CD4-positive, alpha-beta T cell (primary cell): ENCODE measurements at regions of chr22 and their contacts with region 1.

Region 1: GRCh38 chr22:38872172-38872830 is at the start of gene CBX6:
- DNase-seq: peak; percentile 90 to 98 (median 94)
- ATAC-seq: peak; percentile 75
- H3K4me3 ChIP-seq: peak within 1 kb of the TSS; percentile 82
- H3K4me3 Mint-ChIP-seq: peak within 1 kb of the TSS; percentile 96
- H3K27ac ChIP-seq: peak within 1 kb of the TSS; percentile 58 to 73
- H3K27ac Mint-ChIP-seq: peak within 1 kb of the TSS; percentile 92
- H3K4me1 ChIP-seq: peaks cover 62% of the 10 kb centered on the region
- H3K4me1 Mint-ChIP-seq: peaks cover 63% of the 10 kb centered on the region
- H3K27me3 ChIP-seq: no peaks in the 10 kb centered on the region
- H3K27me3 Mint-ChIP-seq: no peaks in the 10 kb centered on the region
- CTCF ChIP-seq: no peak
- total RNA-seq, gene CBX6: 41.6 to 42.8 TPM

Region 2: GRCh38 chr22:37519268-37520195 is 1352.8 kb before region 1 on chr22 and contains the start of gene CARD10:
- CTCF ChIA-PET with region 1: no interaction called
- POLR2A ChIA-PET with region 1: no interaction called
- intact Hi-C with region 1: no loop called
- DNase-seq: peak in 5 of 14 experiments; percentile 6 to 51 (median 21)
- ATAC-seq: peak; percentile 82
- H3K4me3 ChIP-seq: peak within 1 kb of the TSS; percentile 30
- H3K4me3 Mint-ChIP-seq: peak within 1 kb of the TSS; percentile 81
- H3K27ac ChIP-seq: no peak within 1 kb of the TSS
- H3K27ac Mint-ChIP-seq: no peak within 1 kb of the TSS
- H3K4me1 ChIP-seq: peaks cover 13% of the 10 kb centered on the region
- H3K4me1 Mint-ChIP-seq: peaks cover 6% of the 10 kb centered on the region
- H3K27me3 ChIP-seq: peaks cover 40 to 49% of the 10 kb centered on the region in 2 experiments
- H3K27me3 Mint-ChIP-seq: peaks cover 48% of the 10 kb centered on the region
- CTCF ChIP-seq: no peak
- total RNA-seq, gene CARD10: 0.20 to 0.63 TPM

Region 3: GRCh38 chr22:38317122-38317994 is 554.9 kb before region 1 on chr22 and contains the start of gene CSNK1E:
- CTCF ChIA-PET with region 1: no interaction called
- POLR2A ChIA-PET with region 1: no interaction called
- intact Hi-C with region 1: loop called in 1 of 2 experiments (anchors 5 kb)
- DNase-seq: peak; percentile 37 to 88 (median 70)
- ATAC-seq: peak; percentile 55
- H3K4me3 ChIP-seq: peak within 1 kb of the TSS; percentile 67
- H3K4me3 Mint-ChIP-seq: peak within 1 kb of the TSS; percentile 95
- H3K27ac ChIP-seq: peak within 1 kb of the TSS; percentile 78 to 84
- H3K27ac Mint-ChIP-seq: peak within 1 kb of the TSS; percentile 99
- H3K4me1 ChIP-seq: peaks cover 54% of the 10 kb centered on the region
- H3K4me1 Mint-ChIP-seq: peaks cover 50% of the 10 kb centered on the region
- H3K27me3 ChIP-seq: no peaks in the 10 kb centered on the region
- H3K27me3 Mint-ChIP-seq: no peaks in the 10 kb centered on the region
- CTCF ChIP-seq: no peak
- total RNA-seq, gene CSNK1E: 208 to 217 TPM

Region 4: GRCh38 chr22:38927033-38927781 is 54.9 kb after region 1 on chr22:
- CTCF ChIA-PET with region 1: no interaction called
- POLR2A ChIA-PET with region 1: no interaction called
- intact Hi-C with region 1: loop called in 1 of 2 experiments (anchors 5 kb)
- DNase-seq: peak in 13 of 14 experiments; percentile 7 to 69 (median 28)
- ATAC-seq: no peak
- H3K4me3 ChIP-seq: no peak overlapping the region
- H3K4me3 Mint-ChIP-seq: no peak overlapping the region
- H3K27ac ChIP-seq: no peak overlapping the region
- H3K27ac Mint-ChIP-seq: no peak overlapping the region
- H3K4me1 ChIP-seq: peaks cover 8% of the 10 kb centered on the region
- H3K4me1 Mint-ChIP-seq: peaks cover 5% of the 10 kb centered on the region
- H3K27me3 ChIP-seq: peaks cover 20 to 24% of the 10 kb centered on the region in 2 experiments
- H3K27me3 Mint-ChIP-seq: peaks cover 60% of the 10 kb centered on the region
- CTCF ChIP-seq: peak; percentile 37

Region 5: GRCh38 chr22:39117585-39118191 is 245.4 kb after region 1 on chr22:
- CTCF ChIA-PET with region 1: interaction called, 4 read pairs
- POLR2A ChIA-PET with region 1: no interaction called
- intact Hi-C with region 1: loop called (anchors 1 to 2 kb)
- DNase-seq: peak; percentile 54 to 85 (median 67)
- ATAC-seq: peak; percentile 56
- H3K4me3 ChIP-seq: peak overlapping the region; percentile 9
- H3K4me3 Mint-ChIP-seq: peak overlapping the region; percentile 27
- H3K27ac ChIP-seq: peak overlapping the region; percentile 45 to 49
- H3K27ac Mint-ChIP-seq: peak overlapping the region; percentile 67
- H3K4me1 ChIP-seq: peaks cover 29% of the 10 kb centered on the region
- H3K4me1 Mint-ChIP-seq: peaks cover 21% of the 10 kb centered on the region
- H3K27me3 ChIP-seq: no peaks in the 10 kb centered on the region
- H3K27me3 Mint-ChIP-seq: no peaks in the 10 kb centered on the region
- CTCF ChIP-seq: peak; percentile 81

Region 6: DNA sequence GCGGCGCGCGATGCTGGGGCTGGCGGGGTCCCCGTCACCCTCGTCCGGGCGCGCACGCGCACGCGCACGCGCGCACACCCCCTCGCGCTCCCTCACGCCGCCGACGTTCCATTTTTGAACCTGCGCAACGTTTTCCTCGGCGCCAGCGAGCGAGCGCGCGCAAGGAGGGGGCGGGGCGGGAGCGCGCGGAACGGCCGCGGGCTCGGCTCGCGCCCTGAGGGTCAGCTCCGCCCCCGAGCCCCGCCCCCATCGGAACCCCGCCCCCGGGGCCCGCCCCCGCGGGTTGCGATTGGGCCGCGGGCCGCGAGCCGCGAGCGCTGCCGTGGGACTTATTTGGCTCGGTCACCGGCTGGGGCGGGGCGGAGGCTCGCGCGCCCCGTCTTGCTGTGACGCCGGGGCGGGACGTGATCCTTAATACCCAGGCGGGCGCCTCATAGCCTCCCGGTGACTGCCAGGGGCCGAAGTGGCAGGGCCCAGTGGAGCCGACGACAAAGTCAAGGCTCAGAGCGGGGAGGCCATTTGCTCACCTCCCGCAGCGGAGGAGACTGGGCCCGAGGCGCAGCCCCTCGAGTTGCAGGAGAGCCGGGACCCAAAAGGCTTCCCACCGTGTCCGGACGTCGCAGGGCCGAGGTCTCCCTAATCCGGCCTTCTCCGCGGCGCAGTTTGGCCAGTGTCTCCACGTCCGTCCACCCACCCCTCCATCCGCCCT is 280.4 kb after region 1 on chr22 and contains the start of gene CBX7:
- CTCF ChIA-PET with region 1: interaction called, 16 read pairs
- POLR2A ChIA-PET with region 1: interaction called, 8 read pairs
- intact Hi-C with region 1: loop called (anchors 1 to 5 kb)
- DNase-seq: peak; percentile 84 to 98 (median 94)
- ATAC-seq: peak; percentile 83
- H3K4me3 ChIP-seq: peak within 1 kb of the TSS; percentile 94
- H3K4me3 Mint-ChIP-seq: peak within 1 kb of the TSS; percentile 94
- H3K27ac ChIP-seq: peak within 1 kb of the TSS; percentile 83 to 86
- H3K27ac Mint-ChIP-seq: peak within 1 kb of the TSS; percentile 100
- H3K4me1 ChIP-seq: peaks cover 54% of the 10 kb centered on the region
- H3K4me1 Mint-ChIP-seq: peaks cover 39% of the 10 kb centered on the region
- H3K27me3 ChIP-seq: no peaks in the 10 kb centered on the region
- H3K27me3 Mint-ChIP-seq: no peaks in the 10 kb centered on the region
- CTCF ChIP-seq: no peak
- total RNA-seq, gene CBX7: 48.6 to 49.1 TPM